BJ (cell line): ENCODE measurements at regions of chr11 and their contacts with region 1.

Region 1: DNA sequence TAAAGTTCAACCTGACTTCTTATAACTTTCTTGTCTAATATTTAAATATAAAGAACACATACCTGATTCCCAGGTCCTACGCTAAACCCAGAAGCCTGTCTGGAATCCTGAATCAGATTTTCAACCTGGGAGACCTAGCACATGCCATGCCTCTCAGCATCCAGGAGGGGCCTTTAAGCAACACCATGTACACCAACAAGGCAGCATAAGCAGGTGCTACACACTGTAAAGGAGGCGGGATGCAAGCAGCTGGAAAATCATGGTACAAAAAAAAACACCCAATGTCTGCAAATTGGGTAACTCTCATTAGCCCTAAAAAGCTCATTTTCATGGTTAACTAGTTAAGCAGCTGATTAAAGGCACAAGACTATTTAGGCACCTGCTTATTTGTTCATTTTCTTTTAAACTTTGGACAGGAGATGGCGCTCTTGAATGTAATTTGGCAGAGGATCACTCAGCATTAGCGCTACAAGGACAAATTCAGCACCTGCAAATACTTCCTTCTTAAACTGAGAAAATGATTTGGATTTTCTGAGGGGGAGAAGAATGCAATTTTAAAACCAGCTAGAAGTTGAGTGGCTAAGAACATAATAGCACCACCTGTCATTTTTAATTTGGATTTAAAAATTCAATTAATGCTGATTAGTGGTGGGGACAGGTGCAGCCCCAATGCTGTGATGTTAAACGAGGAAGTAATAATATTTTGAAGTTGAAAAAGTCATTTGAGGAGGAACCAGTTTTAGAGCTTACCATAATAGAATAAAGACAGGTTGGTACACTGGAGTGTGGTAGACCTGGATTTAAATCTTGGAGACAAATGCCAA is 104.0 kb downstream of the FAR1 start:
- DNase-seq: peak; percentile 8
- H3K4me3 ChIP-seq: no peak overlapping the region
- H3K27me3 ChIP-seq: peaks cover 5% of the 10 kb centered on the region
- CTCF ChIP-seq: peak; percentile 39

Region 2: DNA sequence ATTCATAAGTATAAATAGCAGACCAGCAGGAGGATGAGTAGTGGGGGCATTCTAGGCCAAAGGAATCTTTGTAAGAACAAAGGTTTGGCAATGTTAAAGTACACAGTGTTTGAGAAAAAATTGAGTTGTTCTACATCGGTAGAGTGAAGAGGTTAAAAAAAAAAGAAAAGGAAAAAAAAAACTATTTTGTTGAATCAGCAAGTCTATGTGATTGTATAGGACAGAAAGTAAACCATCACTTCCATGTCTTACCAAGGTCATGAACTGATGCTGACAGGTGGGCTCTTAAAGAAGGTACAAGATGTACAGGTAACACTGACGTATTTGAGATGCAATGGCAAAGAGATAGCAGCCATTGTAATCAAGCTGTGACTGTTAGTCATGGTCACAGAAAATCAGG is 247.2 kb before region 1 on chr11:
- CTCF ChIA-PET with region 1: no interaction called
- POLR2A ChIA-PET with region 1: no interaction called
- DNase-seq: no peak
- H3K4me3 ChIP-seq: no peak overlapping the region
- H3K27me3 ChIP-seq: no peaks in the 10 kb centered on the region
- CTCF ChIP-seq: no peak

Region 3: GRCh38 chr11:13705710-13706109 is 66.7 kb before region 1 on chr11:
- CTCF ChIA-PET with region 1: no interaction called
- POLR2A ChIA-PET with region 1: no interaction called
- DNase-seq: no peak
- H3K4me3 ChIP-seq: no peak overlapping the region
- H3K27me3 ChIP-seq: no peaks in the 10 kb centered on the region
- CTCF ChIP-seq: no peak

Region 4: GRCh38 chr11:13868710-13869397 is 96.4 kb after region 1 on chr11:
- CTCF ChIA-PET with region 1: no interaction called
- POLR2A ChIA-PET with region 1: no interaction called
- DNase-seq: no peak
- H3K4me3 ChIP-seq: no peak overlapping the region
- H3K27me3 ChIP-seq: no peaks in the 10 kb centered on the region; the same call in 1 of the 2 replicates
- CTCF ChIP-seq: no peak

Region 5: DNA sequence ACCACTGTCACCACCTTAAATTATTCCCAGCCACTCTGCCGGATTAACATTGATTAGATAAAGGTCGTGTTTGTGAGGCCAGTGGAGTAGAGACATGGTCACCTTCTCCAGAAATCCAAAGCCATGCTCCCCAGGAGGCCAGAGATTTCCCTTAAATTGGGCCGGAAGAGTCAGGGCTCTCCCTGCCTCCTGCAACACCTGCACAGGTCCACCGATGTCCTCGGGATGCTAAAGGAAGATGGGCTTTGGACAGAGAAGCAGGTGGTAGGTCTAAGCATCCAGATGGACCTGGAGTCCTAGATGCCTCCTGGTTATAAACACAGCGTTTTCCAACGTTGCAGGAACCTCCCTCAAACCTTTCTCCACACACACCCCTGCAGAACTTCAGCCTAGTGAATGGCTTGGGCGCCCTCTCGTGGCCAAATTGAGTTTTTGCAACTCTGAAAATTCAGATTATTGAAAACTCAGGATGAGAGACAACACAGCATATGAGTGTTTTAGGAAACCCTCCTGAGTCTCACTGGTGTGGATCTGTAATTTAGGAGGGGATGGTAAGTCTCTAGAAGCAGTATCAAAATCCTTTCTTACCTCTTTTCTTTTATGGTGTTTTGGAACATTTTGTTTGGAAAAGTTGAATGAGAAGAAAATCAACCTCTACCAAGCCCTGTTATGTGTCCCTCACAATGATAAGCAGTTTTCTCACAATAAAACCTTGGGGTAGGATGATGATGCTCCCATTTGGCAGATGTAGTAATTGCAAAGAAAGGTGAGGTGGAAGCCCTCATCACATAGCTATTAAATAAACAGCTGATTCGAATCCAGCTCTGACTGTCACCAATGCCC is 476.9 kb after region 1 on chr11:
- CTCF ChIA-PET with region 1: interaction called, 24 read pairs
- POLR2A ChIA-PET with region 1: no interaction called
- DNase-seq: no peak
- H3K4me3 ChIP-seq: no peak overlapping the region
- H3K27me3 ChIP-seq: peaks cover 13% of the 10 kb centered on the region
- CTCF ChIP-seq: peak; percentile 82